Transverse colon (tissue), 4 donors: ENCODE measurements at regions of chr5 and their contacts with region 1.

Region 1: DNA sequence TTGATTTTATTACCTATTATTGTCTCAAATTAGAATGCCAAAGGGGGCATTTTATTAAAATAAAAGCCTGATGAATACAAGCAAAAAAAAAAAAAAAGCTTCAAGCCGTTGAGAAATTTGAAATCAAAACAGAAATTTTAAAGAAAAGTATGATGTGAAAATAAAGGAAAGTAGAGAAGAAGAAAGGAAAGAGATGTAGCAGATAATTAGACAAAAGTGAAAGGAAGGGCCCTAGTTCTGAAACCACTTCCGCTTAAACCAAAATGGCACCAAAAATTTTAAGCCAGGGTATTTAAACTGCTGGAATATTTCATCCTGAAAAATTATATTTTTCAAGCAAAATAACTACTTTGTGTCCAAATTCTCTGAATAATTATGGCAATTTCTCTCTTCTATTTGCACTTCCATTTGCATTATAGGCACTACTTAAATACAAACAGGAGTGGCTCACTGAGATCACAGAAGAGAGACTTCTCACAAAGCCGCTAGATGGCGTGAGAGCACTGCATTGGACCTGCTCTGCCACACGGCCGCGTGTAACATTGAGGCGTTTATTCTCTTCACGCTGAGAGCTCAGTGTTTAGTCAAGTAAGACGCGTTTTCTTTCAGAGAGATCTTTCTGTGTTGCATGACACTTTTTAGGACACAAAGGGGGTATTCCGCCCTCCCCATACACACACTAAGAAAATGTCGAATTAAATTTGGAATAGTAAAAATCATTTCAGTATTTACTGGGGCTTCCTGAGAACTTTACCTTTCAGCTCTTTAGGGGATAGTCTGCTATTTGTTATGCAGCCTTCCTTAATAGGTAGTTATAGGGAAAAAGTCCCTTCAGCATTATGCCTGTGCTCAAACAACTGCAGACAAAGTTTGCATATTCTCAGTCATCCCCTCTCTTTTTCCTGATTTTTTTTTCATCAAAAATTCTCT is 368.4 kb upstream of the CCNH start:
- DNase-seq: peak; percentile 76
- H3K4me3 ChIP-seq: no peak overlapping the region
- H3K27ac ChIP-seq: no peak overlapping the region
- H3K4me1 ChIP-seq: peaks cover 0 to 3% (median 0%) of the 10 kb centered on the region in 4 donors
- H3K27me3 ChIP-seq: peaks cover 67% of the 10 kb centered on the region
- CTCF ChIP-seq: peak; percentile 78 to 85 (median 83)
- EP300 ChIP-seq: no peak
- POLR2A ChIP-seq: no peak

Region 2: DNA sequence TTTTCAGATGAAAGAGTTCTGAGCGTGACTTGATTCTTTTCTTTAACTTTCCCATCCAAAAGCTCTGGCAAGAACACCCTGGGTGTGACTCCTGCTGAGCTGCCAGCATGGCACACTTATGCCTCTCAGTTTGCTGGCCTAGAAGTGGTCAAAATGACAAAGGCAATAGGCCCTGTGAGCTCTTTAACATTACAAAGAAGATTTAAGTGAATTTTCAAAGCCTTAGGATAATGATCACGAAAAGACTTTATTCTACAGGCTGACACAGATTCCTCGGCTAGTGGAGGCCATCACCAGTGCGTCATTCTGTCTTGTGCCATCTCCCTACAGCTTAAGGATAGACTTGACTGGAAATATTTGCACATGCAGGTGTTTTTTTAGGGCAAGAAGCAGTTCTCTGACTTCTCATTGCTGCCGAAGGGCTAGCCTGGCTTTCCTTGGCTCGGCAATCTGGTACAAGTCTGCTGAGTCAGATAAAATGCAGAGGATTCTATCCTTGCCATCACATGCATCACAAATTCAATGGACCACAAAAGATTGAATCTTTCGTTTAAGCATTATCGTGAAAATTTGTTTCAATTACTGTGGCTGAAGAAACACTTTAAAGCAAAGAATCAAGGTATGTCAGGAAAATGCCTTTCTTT is 851.9 kb before region 1 on chr5:
- in situ Hi-C with region 1: no loop called
- intact Hi-C with region 1: no loop called
- DNase-seq: no peak
- H3K4me3 ChIP-seq: no peak overlapping the region
- H3K27ac ChIP-seq: no peak overlapping the region
- H3K4me1 ChIP-seq: no peaks in the 10 kb centered on the region
- H3K27me3 ChIP-seq: no peaks in the 10 kb centered on the region
- CTCF ChIP-seq: no peak
- EP300 ChIP-seq: no peak
- POLR2A ChIP-seq: no peak

Region 3: DNA sequence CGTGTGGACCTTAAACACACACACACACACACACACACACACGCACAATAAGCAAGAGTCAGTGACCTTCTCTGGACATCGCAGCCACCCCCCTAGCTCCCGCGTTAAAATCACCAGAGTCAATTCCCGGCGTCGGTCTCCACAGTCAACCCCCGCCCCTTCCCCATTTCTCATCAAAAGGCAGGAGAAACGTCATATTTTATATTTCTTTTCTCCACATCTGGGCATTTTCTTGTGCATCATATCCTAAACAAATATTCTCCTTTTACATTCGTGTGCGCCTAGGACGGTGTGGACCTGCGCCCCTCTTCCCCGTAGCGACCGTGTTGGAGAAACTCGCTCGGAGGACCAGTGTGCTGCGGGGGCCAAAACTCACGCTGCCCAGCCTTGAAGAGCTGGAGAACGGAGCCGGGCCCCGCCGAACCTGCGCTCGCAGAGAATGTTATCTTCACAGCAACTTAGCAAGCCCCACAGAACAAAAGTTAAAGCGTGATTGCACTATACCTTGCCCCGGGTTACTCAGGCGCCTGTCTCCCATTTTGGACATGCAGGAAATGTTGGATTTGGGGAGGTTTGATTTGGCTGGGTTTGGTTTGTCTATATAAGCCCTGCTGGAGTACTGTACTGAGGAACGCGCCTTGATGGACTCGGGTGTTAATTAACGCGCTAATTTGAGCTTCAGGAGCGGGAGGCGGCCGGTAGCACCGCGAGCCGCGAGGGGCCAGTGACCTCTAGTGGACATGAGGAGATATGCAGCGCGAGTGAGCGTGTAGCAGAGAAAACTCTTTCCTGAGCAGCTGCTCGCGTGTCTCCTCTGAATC is 909.5 kb after region 1 on chr5:
- in situ Hi-C with region 1: loop called in 2 of 4 experiments (anchors 5 to 10 kb)
- intact Hi-C with region 1: loop called (anchors 2 kb)
- DNase-seq: peak; percentile 70
- H3K4me3 ChIP-seq: peak overlapping the region in 1 of 4 donors; percentile 28
- H3K27ac ChIP-seq: no peak overlapping the region
- H3K4me1 ChIP-seq: peaks cover 14 to 32% (median 19%) of the 10 kb centered on the region in 4 donors
- H3K27me3 ChIP-seq: peaks cover 100% of the 10 kb centered on the region
- CTCF ChIP-seq: peak; percentile 80 to 98 (median 94)
- EP300 ChIP-seq: no peak
- POLR2A ChIP-seq: no peak